ENCODE measurements at regions of chr10 and their contacts with region 1.

Region 1: GRCh38 chr10:35336084-35336831 is at the start of gene CCNY:
- DNase-seq: peak; percentile 90
- ATAC-seq: peak; percentile 59
- H3K4me3 Mint-ChIP-seq: peak within 1 kb of the TSS; percentile 89
- H3K27ac Mint-ChIP-seq: peak within 1 kb of the TSS; percentile 90
- H3K4me1 Mint-ChIP-seq: peaks cover 71% of the 10 kb centered on the region
- H3K27me3 Mint-ChIP-seq: no peaks in the 10 kb centered on the region
- total RNA-seq, gene CCNY: 49.4 to 54.0 TPM

Region 2: DNA sequence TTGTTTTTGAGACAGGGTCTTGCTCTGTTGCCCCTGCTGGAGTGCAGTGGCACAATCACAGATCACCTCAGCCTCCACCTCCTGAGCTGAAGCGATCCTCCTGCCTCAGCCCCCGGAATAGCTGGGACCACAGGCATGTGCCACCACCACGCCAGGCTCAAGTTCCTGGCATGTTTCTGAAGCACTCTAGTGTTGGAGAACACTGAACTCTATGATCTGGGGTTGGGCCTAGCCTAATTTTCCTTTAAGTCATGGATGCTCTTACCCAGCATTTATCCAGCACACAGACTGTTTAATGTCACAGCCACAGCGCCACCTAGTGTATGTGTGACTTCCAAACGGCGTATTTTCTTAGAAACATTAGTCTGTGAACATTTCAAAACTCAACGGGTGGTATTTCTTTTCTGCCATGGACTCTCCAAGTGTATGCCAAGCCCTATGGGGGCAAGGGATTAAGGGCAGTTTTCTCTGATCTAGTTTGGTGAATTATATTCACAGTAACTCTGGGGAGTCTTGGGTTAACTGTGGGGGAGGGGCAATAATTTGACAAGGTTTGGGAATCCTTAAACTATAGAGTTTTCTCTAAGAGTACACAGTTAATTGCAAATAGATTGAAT is 117.8 kb before region 1 on chr10:
- CTCF ChIA-PET with region 1: no interaction called
- POLR2A ChIA-PET with region 1: no interaction called
- intact Hi-C with region 1: loop called (anchors 2 to 5 kb)
- DNase-seq: peak; percentile 94
- ATAC-seq: peak; percentile 83
- H3K4me3 Mint-ChIP-seq: peak overlapping the region; percentile 47
- H3K27ac Mint-ChIP-seq: peak overlapping the region; percentile 96
- H3K4me1 Mint-ChIP-seq: peaks cover 52% of the 10 kb centered on the region
- H3K27me3 Mint-ChIP-seq: peaks cover 2% of the 10 kb centered on the region

Region 3: DNA sequence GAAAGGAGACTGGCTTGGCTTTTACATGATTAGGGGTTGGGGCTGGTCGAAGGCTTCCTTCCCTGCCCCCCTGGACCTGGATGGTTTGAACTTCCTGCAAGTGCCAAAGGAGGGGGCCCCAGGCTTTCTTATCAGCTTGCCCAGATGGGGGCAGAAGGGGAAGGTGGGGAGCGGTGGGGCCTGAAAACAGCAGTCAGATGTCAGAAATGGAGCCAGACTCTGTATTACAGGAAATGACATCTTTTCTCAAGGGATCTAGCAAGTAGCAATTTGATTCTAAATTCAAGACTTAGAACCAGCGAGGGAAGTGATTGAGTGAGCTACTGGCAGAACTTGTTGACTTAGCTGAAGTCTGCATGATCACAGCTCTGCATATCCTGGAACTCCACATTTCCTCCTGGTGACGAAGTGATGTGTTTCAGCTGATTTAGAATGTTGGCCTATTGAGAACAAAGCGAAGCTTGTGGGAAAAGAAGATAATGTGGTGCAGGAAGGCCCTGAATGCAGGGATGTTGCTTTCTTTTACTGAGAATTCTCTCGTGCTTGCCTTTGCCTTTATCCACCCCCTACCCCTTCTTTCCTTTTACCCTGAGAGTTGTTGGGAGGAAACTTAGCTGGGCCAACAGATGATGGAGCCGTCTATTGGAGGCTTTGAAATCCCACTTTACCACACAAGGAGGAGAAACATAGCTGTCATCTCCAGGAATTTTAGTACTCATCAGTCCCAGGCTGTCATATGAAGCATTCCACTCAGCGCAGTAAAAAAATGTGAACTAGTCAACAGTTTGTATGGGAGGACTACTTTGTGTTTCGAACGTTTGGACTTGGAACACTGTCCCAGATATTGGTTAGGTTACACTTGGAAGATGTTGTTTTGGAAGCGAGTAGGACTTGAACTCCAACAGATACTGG is 43.2 kb after region 1 on chr10:
- CTCF ChIA-PET with region 1: interaction called, 3 read pairs
- POLR2A ChIA-PET with region 1: no interaction called
- intact Hi-C with region 1: loop called (anchors 1 to 2 kb)
- DNase-seq: peak; percentile 34
- ATAC-seq: peak; percentile 45
- H3K4me3 Mint-ChIP-seq: peak overlapping the region; percentile 28
- H3K27ac Mint-ChIP-seq: peak overlapping the region; percentile 88
- H3K4me1 Mint-ChIP-seq: peaks cover 66% of the 10 kb centered on the region
- H3K27me3 Mint-ChIP-seq: no peaks in the 10 kb centered on the region

Region 4: GRCh38 chr10:35442028-35442427 is 105.8 kb after region 1 on chr10:
- CTCF ChIA-PET with region 1: interaction called, 7 read pairs
- POLR2A ChIA-PET with region 1: interaction called, 4 read pairs
- intact Hi-C with region 1: loop called (anchors 1 kb)
- DNase-seq: peak; percentile 37
- ATAC-seq: peak; percentile 66
- H3K4me3 Mint-ChIP-seq: peak overlapping the region; percentile 18
- H3K27ac Mint-ChIP-seq: peak overlapping the region; percentile 83
- H3K4me1 Mint-ChIP-seq: peaks cover 51% of the 10 kb centered on the region
- H3K27me3 Mint-ChIP-seq: no peaks in the 10 kb centered on the region

Region 5: DNA sequence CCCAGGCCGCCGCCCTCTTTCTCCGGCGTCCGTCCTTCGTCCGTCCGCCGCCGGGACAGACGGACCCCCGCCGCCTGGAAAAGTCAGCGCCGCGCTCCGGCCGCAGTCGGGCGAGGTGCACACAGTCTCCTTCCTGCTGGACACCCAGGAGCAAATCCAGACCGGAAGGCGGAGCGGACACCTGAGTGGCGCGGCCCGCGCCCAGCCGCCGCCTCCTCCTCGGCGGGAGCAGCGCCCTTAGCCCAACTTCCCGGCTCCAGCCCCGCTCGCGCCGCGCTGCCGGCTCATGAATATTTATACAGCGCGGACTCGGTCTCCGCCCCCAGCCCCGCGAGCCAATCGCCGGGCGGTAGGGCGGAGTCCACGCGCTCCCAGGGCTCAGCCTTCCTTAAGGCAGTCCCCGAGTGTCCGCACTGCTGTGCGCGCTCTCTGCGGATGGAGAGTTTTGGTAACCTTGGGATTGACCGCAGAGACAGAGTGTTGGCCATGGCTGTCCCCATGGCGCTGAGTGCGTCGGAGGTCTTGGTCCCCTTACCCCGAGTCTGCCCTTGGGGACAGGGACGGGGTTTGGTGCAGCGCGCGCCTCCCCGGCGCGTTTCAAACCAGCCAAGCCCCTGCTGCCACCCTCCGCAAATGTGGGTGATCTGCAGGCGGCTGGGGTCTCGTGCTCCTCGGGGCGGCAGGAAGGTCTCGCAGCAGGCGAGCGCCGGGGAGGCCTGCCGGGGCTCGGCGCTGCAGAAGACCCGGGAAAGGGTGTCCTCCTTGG is 306.0 kb after region 1 on chr10 and contains the start of gene FZD8:
- CTCF ChIA-PET with region 1: no interaction called
- POLR2A ChIA-PET with region 1: no interaction called
- intact Hi-C with region 1: loop called in 1 of 2 experiments (anchors 1 kb)
- DNase-seq: peak; percentile 85
- ATAC-seq: peak; percentile 90
- H3K4me3 Mint-ChIP-seq: peak within 1 kb of the TSS; percentile 71
- H3K27ac Mint-ChIP-seq: no peak within 1 kb of the TSS
- H3K4me1 Mint-ChIP-seq: peaks cover 20% of the 10 kb centered on the region
- H3K27me3 Mint-ChIP-seq: peaks cover 43% of the 10 kb centered on the region
- total RNA-seq, gene FZD8: 0.16 to 0.18 TPM

Region 6: GRCh38 chr10:35685402-35685801 is 349.1 kb after region 1 on chr10:
- CTCF ChIA-PET with region 1: no interaction called
- POLR2A ChIA-PET with region 1: no interaction called
- intact Hi-C with region 1: no loop called
- DNase-seq: no peak
- ATAC-seq: no peak
- H3K4me3 Mint-ChIP-seq: no peak overlapping the region
- H3K27ac Mint-ChIP-seq: no peak overlapping the region
- H3K4me1 Mint-ChIP-seq: no peaks in the 10 kb centered on the region
- H3K27me3 Mint-ChIP-seq: peaks cover 6% of the 10 kb centered on the region